HCT116 (cell line): ENCODE measurements at regions of chr12 and their contacts with region 1.

Region 1: DNA sequence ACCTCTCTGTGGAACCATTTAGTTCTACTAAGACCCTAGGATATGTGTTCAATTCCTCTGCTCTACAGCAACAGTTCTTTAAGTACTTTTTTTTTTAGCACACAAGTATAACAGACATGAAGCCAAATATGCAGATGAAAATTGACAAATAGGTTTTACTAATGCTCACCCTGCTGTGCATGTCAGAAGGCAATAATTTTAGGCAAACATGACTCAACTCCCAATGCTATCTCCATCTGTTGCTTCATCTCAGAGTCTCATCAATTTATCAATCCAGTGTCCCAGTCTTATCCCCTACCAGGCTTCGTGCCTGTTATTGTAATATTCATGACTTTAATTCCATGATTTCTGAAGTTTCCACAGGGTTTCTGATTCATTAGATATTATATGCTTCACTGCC is 57.7 kb downstream of the DBX2 start:
- DNase-seq: no peak
- ATAC-seq: no peak
- H3K4me3 ChIP-seq: no peak overlapping the region
- H3K27ac ChIP-seq: no peak overlapping the region
- H3K4me1 ChIP-seq: no peaks in the 10 kb centered on the region
- H3K27me3 ChIP-seq: no peaks in the 10 kb centered on the region
- CTCF ChIP-seq: no peak
- POLR2A ChIP-seq: no peak
- RAD21 ChIP-seq: no peak

Region 2: GRCh38 chr12:45017916-45018315 is 24.8 kb after region 1 on chr12:
- CTCF ChIA-PET with region 1: no interaction called
- POLR2A ChIA-PET with region 1: no interaction called
- RAD21 ChIA-PET with region 1: no interaction called
- intact Hi-C with region 1: loop called (anchors 2 kb)
- DNase-seq: no peak
- ATAC-seq: no peak
- H3K4me3 ChIP-seq: no peak overlapping the region
- H3K27ac ChIP-seq: no peak overlapping the region
- H3K4me1 ChIP-seq: no peaks in the 10 kb centered on the region
- H3K27me3 ChIP-seq: no peaks in the 10 kb centered on the region
- CTCF ChIP-seq: no peak
- POLR2A ChIP-seq: no peak
- RAD21 ChIP-seq: no peak